Naive thymus-derived CD4-positive, alpha-beta T cell (primary cell): ENCODE measurements at regions of chr2 and their contacts with region 1.

Region 1: DNA sequence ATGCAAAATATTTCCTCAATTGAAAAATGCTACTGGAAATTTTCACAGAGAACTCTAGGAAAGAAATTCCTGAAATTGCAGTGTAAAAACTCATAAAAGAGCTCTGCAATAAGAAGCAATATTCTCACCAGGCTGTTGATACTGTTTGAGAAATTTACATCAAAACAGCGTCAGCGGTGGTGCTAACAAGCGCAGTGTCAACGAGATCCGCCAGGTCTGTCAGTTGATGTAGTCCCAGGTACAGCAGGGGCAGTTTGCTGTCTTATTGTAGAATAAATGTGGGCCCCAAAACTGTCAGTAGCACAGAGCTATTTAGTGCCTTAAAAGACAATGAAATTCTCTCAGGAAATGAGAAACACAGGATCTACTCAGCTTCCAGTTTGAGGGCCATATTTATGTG is 611.2 kb downstream of the ARHGAP15 start:
- DNase-seq: no peak
- ATAC-seq: no peak
- H3K4me3 ChIP-seq: no peak overlapping the region
- H3K4me3 Mint-ChIP-seq: no peak overlapping the region
- H3K27ac ChIP-seq: no peak overlapping the region
- H3K27ac Mint-ChIP-seq: peak overlapping the region in 2 of 9 donors; percentile 32 to 36
- H3K4me1 ChIP-seq: no peaks in the 10 kb centered on the region
- H3K4me1 Mint-ChIP-seq: peaks cover 0 to 24% (median 6%) of the 10 kb centered on the region in 7 donors
- H3K27me3 ChIP-seq: no peaks in the 10 kb centered on the region
- H3K27me3 Mint-ChIP-seq: no peaks in the 10 kb centered on the region

Region 2: DNA sequence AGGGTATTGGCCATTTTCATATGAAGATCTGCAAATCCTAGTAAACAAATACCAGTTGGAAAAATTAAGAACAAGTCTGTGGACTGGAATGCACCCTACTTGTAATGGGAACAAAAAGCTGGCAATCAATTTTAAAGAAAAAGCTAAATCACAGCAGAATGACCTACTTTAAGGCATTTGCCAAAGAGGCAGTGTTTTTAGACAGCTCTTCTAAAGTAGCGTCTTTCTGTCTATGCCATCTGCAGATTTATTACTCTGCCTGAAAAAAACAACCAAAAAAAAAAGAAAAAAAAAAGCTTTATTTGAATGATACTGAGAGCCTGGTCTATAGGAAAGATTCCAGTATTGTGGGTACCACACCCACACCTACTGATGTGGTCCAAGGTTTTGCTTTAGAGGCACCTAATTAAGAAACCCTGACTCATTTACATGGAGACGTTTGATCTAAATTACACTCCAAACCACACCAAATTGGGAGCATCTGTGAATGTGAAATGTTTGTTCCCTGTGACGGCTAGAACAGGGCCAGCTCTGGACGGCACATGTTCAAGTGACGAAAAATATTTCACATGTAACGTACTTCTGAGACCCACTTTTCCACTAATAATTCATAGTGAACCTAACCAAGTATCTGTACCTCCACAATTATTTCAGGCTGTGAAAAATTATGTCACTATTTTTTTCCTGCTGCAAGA is 14.1 kb before region 1 on chr2:
- CTCF ChIA-PET with region 1: no interaction called
- POLR2A ChIA-PET with region 1: no interaction called
- intact Hi-C with region 1: loop called in 1 of 2 experiments (anchors 2 kb)
- DNase-seq: no peak
- ATAC-seq: no peak
- H3K4me3 ChIP-seq: no peak overlapping the region
- H3K4me3 Mint-ChIP-seq: no peak overlapping the region
- H3K27ac ChIP-seq: no peak overlapping the region
- H3K27ac Mint-ChIP-seq: peak overlapping the region in 1 of 9 donors; percentile 48
- H3K4me1 ChIP-seq: peaks cover 0 to 12% of the 10 kb centered on the region in 2 donors
- H3K4me1 Mint-ChIP-seq: peaks cover 14 to 59% (median 37%) of the 10 kb centered on the region in 7 donors
- H3K27me3 ChIP-seq: no peaks in the 10 kb centered on the region
- H3K27me3 Mint-ChIP-seq: no peaks in the 10 kb centered on the region

Region 3: DNA sequence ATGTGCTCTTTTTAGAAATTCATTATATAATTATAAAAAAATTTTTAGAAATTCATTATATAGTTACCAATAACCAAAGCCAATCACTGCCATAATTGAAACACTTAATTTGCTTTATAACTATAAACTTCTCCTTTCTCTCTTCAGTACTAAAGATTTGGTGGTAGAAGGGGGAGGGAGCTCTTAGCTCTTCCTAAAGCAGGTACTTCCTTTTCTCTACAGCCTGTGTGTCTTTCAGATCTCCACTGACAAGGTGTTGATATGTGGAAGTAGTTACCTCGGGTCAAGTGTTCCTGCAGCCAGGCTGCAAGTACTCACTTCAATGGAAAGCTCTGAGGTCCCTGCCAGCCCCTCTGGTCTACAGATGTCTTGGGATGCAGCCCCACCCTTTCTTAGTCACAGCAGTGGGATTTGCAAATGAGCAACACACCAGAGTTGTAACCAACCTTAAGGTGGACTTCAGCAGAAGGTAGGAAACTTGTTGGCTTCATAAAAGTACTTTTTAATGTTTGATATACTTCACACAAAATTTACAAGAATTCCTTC is 78.8 kb after region 1 on chr2:
- CTCF ChIA-PET with region 1: no interaction called
- POLR2A ChIA-PET with region 1: no interaction called
- intact Hi-C with region 1: no loop called
- DNase-seq: no peak
- ATAC-seq: no peak
- H3K4me3 ChIP-seq: no peak overlapping the region
- H3K4me3 Mint-ChIP-seq: no peak overlapping the region
- H3K27ac ChIP-seq: no peak overlapping the region
- H3K27ac Mint-ChIP-seq: no peak overlapping the region
- H3K4me1 ChIP-seq: no peaks in the 10 kb centered on the region
- H3K4me1 Mint-ChIP-seq: no peaks in the 10 kb centered on the region
- H3K27me3 ChIP-seq: no peaks in the 10 kb centered on the region
- H3K27me3 Mint-ChIP-seq: peaks cover 1 to 13% (median 8%) of the 10 kb centered on the region in 5 donors

Region 4: GRCh38 chr2:144374163-144374661 is 633.8 kb after region 1 on chr2:
- CTCF ChIA-PET with region 1: no interaction called
- POLR2A ChIA-PET with region 1: no interaction called
- intact Hi-C with region 1: no loop called
- DNase-seq: no peak
- ATAC-seq: peak; percentile 65
- H3K4me3 ChIP-seq: no peak overlapping the region
- H3K4me3 Mint-ChIP-seq: no peak overlapping the region
- H3K27ac ChIP-seq: no peak overlapping the region
- H3K27ac Mint-ChIP-seq: no peak overlapping the region
- H3K4me1 ChIP-seq: peaks cover 3 to 6% of the 10 kb centered on the region in 2 donors
- H3K4me1 Mint-ChIP-seq: peaks cover 0 to 10% (median 7%) of the 10 kb centered on the region in 7 donors
- H3K27me3 ChIP-seq: no peaks in the 10 kb centered on the region
- H3K27me3 Mint-ChIP-seq: peaks cover 4 to 32% (median 22%) of the 10 kb centered on the region in 5 donors